Kidney (tissue), 22 donors: ENCODE measurements at regions of chr12 and their contacts with region 1.

Region 1: DNA sequence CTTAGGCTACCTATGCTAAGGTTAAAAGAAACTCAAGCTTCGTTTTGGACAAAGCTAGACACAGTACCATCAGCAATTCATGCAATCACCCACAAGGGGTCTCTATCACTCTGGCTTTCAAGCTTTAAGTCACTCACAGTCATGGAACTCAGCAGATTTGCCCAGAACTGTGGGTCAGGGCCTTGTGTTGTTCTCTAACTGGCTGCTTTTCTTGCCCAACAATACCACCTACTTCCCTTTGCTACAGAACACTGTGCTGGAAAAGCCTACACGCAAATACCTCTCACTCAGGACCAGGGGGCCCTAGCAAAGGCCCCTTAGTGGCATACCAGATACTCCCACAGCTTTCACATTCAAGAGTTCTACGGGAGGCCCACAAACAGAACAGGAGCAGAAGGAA is 9.1 kb downstream of the NEMP1 start:
- DNase-seq: peak in 4 of 5 donors; percentile 72 to 94 (median 80)
- H3K4me3 ChIP-seq: no peak overlapping the region
- H3K27ac ChIP-seq: peak overlapping the region; percentile 9 to 49
- H3K4me1 ChIP-seq: peaks cover 0 to 6% (median 0%) of the 10 kb centered on the region in 3 donors
- H3K27me3 ChIP-seq: no peaks in the 10 kb centered on the region
- CTCF ChIP-seq: peak; percentile 93

Region 2: DNA sequence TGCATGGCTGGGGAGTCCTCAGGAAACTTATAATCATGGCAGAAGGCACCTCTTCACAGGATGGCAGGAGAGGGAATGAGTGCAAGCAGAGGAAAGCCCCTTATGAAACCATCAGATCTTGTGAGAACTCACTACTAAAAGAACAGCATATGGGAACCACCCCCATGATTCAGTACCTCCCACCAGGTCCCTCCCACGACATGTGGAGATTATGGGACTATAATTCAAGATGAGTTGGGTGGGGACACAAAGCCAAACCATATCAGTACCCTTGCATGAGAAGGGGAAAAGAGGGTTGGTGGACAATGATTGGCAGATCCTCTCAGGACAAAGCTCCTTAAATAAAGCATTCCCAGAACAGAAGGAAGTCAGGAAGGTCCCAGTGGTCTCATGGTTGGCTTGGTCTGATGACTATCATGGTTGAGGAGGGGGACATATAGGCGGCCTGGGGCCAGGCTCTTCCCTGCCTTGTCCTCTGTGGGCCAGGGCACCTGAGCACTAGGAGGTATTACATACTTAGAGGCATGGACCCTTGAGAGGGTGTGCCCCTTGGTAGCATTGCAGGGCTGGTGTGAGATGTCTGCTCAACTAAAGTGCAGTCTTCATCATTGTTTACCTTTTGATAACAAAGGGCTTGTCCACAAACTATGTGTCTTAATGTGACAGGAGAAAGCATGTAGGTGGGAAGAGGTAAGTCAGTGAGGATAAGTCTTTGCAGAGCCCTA is 284.2 kb before region 1 on chr12:
- intact Hi-C with region 1: no loop called
- DNase-seq: no peak
- H3K4me3 ChIP-seq: no peak overlapping the region
- H3K27ac ChIP-seq: no peak overlapping the region
- H3K4me1 ChIP-seq: no peaks in the 10 kb centered on the region
- H3K27me3 ChIP-seq: no peaks in the 10 kb centered on the region
- CTCF ChIP-seq: no peak

Region 3: DNA sequence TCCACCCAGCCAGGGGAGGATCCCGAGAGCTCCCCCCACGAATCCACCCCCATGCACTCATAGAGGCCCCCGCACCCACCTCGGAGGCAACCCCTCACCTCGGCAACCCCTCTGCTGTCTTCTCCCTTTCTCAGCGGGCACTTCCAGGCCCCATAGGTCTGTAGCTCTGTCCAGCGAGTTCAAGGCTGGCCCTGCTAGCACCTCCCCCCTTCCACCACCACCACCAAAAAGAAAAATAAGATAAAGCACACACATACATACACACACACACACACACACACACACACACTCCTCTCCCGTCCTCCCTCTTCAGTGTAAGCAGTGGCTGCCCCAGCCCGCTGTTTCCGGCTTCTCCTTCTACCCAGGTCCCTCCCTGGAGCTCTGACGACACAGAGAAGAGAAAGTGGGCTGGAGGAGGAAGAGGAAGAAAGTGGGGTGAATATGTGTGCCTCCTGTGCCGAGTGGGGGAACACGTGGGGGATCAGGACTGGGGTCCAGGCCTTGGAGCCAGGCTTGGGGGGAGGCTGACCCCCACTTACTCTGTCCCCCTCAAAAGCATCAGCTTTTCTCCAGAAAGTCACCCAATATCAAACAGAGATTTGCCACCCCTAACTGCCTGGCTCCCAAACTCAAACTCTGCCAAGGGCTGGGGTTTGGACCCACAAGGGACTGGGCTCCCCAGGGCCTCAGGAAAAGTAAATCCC is 41.7 kb after region 1 on chr12 and contains the start of gene STAT6:
- intact Hi-C with region 1: loop called (anchors 5 kb)
- DNase-seq: peak; percentile 76 to 94 (median 88)
- H3K4me3 ChIP-seq: peak within 1 kb of the TSS; percentile 85 to 93 (median 87)
- H3K27ac ChIP-seq: peak within 1 kb of the TSS; percentile 99 to 100
- H3K4me1 ChIP-seq: peaks cover 0 to 17% (median 8%) of the 10 kb centered on the region in 3 donors
- H3K27me3 ChIP-seq: no peaks in the 10 kb centered on the region
- CTCF ChIP-seq: no peak
- total RNA-seq, gene STAT6: 232 TPM

Region 4: DNA sequence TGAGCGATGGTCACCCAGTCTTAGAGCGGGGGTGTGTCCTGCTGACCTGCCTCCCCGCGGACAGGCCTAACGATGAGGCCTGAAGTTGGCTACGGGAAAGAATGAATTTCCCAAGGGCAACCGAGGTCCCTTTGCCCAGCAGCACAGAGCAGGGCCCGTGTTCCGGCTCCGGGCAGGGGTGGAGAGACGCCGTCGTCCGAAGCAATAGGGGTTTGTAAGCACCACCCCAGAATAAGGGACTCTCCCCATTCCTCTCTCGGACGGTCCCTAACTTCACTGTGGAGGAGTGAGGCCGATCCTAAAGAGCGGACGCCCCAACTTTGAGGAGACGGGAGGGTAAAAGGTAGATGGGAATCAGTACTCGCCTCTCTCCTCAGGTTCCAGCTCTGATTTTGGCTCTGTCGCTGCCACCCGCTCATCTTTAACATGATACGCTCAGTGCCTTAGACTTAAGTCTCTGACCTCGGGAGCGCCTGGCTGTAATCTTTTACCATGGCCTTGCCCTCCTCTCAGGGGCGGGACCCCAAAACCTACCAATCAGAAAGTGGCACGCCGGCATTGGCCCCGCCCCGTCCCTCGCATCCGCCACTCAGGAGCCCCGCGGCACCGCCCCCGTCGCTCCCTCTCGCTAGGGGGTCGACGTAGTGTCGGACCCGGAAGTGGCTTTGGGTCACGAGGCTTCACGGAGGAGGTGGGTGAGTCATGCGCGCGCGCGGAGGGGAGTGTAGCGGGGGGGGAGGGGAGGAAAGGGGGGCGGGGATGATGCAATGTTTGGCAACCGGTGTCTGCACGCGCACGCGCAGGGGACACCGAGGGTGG is 450.7 kb after region 1 on chr12 and contains the start of gene DDIT3:
- intact Hi-C with region 1: no loop called
- DNase-seq: peak; percentile 99 to 100 (median 100)
- H3K4me3 ChIP-seq: peak within 1 kb of the TSS; percentile 91 to 99 (median 99)
- H3K27ac ChIP-seq: peak within 1 kb of the TSS; percentile 100
- H3K4me1 ChIP-seq: peaks cover 7 to 39% (median 32%) of the 10 kb centered on the region in 3 donors
- H3K27me3 ChIP-seq: no peaks in the 10 kb centered on the region
- CTCF ChIP-seq: no peak
- total RNA-seq, gene DDIT3: 34.1 TPM